ENCODE measurements at regions of chr14 and their contacts with region 1.

Region 1: GRCh38 chr14:99047441-99048031 is 224.5 kb downstream of the BCL11B start:
- DNase-seq: no peak

Region 2: DNA sequence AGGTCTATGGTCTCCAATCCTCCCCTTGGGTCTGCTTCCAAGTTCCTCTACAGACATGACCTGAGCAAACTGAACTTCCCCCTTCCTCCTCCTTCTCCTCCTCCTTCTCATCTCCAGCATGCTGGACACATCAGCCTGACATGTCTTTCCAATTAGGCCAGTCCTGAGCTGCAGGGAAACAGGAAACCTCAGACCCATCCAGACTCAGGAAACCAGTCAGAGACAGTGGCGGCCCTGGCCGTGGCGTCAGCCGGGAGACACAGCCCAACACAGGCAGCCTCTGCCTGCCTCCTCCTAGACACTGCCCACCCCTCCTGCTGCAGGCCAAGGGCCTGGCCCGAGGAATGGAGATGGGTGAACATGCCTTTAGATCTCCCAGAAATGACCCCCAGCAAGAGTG is 244.3 kb before region 1 on chr14:
- intact Hi-C with region 1: loop called in 1 of 2 experiments (anchors 5 kb)
- DNase-seq: no peak